Activated T-helper 2 cell treated with anti-CD3 and anti-CD28 coated beads, Interferon-gamma antibody, Interleukin-2, Interleukin-4, amounts not matched to agents 10 μg/mL and 5 μg/mL and 100 μg/mL, durations not matched to agents 14 hours and 24 hours and 36 hours (primary cell): ENCODE measurements at regions of chr10 and their contacts with region 1.

Region 1: GRCh38 chr10:70197235-70197945 is 27.1 kb upstream of the SAR1A start:
- DNase-seq: no peak
- H3K4me3 Mint-ChIP-seq: no peak overlapping the region
- H3K27ac Mint-ChIP-seq: peak overlapping the region; percentile 34
- H3K4me1 Mint-ChIP-seq: peaks cover 32% of the 10 kb centered on the region
- H3K27me3 Mint-ChIP-seq: no peaks in the 10 kb centered on the region

Region 2: GRCh38 chr10:70162892-70163201 is 34.5 kb before region 1 on chr10:
- intact Hi-C with region 1: loop called (anchors 5 kb)
- DNase-seq: peak; percentile 68
- H3K4me3 Mint-ChIP-seq: peak overlapping the region; percentile 53
- H3K27ac Mint-ChIP-seq: peak overlapping the region; percentile 88
- H3K4me1 Mint-ChIP-seq: peaks cover 60% of the 10 kb centered on the region
- H3K27me3 Mint-ChIP-seq: no peaks in the 10 kb centered on the region

Region 3: DNA sequence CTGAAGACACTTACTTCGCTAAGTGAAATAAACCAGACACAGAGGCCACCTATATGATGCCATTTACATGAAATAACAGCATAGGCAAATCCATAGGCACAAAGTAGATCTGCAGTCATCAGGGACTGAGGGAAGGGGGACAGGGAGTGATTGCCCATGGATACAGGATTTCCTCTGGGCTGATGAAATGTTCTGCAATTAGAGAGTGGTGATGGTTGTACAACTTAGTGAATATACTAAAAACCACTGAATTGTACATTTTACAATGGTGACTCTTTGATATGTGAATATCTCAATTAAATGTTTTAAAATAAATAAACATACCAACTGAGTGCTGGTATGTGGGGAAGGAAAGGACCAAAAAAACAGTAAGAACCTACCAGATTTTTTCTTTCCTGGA is 15.5 kb after region 1 on chr10:
- intact Hi-C with region 1: no loop called
- DNase-seq: no peak
- H3K4me3 Mint-ChIP-seq: no peak overlapping the region
- H3K27ac Mint-ChIP-seq: no peak overlapping the region
- H3K4me1 Mint-ChIP-seq: no peaks in the 10 kb centered on the region
- H3K27me3 Mint-ChIP-seq: no peaks in the 10 kb centered on the region

Region 4: GRCh38 chr10:70381471-70382421 is 184.4 kb after region 1 on chr10:
- intact Hi-C with region 1: no loop called
- DNase-seq: peak; percentile 40
- H3K4me3 Mint-ChIP-seq: peak overlapping the region; percentile 85
- H3K27ac Mint-ChIP-seq: no peak overlapping the region
- H3K4me1 Mint-ChIP-seq: peaks cover 14% of the 10 kb centered on the region
- H3K27me3 Mint-ChIP-seq: no peaks in the 10 kb centered on the region